Dorsolateral prefrontal cortex (tissue), 120 donors: ENCODE measurements at regions of chr2 and their contacts with region 1.

Region 1: DNA sequence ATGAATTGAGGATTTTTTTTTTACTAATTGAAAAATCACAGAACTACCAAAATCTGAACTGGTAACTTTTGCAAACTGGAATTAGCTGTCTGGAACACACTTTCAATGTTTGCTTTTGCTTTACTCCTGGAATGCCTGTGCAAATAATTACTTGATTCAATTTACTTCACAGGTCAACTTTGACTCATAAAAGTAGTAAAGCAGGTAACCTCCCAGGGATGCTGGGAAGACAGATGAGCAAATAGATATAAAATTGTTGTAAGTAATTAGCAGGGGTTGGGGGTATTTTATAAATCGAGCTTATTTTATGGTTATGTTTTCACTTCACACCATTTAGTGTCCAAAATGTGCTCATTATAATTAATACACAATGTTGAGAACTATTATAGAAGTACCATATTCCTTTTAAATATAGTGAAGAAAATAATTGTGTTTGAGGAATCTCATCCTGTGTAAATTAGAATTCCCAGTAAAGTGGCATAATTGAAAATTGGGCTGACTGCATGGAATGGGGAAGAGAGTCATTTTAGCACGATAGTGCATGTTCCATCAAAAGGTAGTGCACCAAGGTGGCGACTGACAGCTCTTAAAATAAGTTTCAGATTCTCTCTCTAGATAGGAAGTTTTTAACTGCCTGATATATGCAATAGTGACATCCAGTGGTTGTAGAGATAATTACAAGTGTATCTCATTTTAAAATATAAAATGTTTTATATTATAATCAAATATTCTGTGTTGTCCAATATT is 398.1 kb upstream of the HNRNPA3 start:
- DNase-seq: no peak
- H3K4me3 ChIP-seq: no peak overlapping the region
- H3K27ac ChIP-seq: peak overlapping the region in 1 of 59 donors; percentile 1
- H3K27me3 ChIP-seq: peaks cover 0 to 5% (median 0%) of the 10 kb centered on the region in 45 donors
- CTCF ChIP-seq: peak; percentile 52 to 80 (median 66)

Region 2: DNA sequence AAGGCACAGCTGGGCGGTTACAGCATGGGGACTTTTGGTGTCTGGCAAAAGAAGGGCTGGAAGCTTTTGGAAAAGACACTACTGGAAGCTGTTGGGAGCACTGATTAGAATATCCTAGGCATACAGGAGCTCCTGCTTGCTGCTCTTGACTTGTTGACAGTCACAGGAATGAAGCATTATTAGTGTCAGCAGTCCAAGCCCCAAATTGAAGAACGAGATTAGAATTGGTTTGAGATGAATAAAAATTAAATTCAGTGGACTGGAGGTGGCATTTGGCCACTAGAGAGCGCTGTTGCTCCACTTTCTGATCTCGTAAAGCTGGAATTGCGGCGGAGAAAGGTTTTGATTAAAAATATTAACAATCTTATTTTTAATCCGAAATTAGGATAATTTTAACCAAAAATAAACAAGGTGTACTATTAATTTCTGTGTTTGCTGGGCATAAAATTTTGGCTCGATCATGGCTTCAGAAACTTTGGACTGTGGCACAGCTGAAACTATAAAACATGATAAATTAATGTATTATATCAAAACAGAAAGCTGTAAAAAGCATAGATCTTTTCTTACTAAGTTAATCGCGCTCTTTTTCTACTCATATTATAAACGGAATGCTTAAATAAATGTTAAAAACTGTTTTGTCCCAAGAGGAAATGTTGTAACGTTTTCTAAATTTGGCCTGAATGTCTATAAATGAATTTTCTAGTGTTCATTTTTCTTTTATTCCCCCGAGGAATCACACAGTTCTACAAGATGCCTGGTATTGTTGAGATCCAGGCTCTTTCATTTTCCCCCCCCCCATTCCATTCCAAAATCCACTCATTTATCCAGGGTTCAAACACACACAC is 687.3 kb before region 1 on chr2:
- intact Hi-C with region 1: loop called in 1 of 2 experiments (anchors 10 kb)
- DNase-seq: peak in 9 of 10 donors; percentile 47 to 74 (median 63)
- H3K4me3 ChIP-seq: no peak overlapping the region
- H3K27ac ChIP-seq: no peak overlapping the region
- H3K27me3 ChIP-seq: peaks cover 22 to 100% (median 95%) of the 10 kb centered on the region in 45 donors
- CTCF ChIP-seq: peak; percentile 73 to 98 (median 90)

Region 3: GRCh38 chr2:176653479-176654443 is 160.7 kb before region 1 on chr2:
- intact Hi-C with region 1: loop called in 1 of 2 experiments (anchors 10 kb)
- DNase-seq: peak in 8 of 10 donors; percentile 28 to 59 (median 38)
- H3K4me3 ChIP-seq: peak overlapping the region in 1 of 59 donors; percentile 12
- H3K27ac ChIP-seq: no peak overlapping the region
- H3K27me3 ChIP-seq: peaks cover 0 to 52% (median 7%) of the 10 kb centered on the region in 45 donors
- CTCF ChIP-seq: peak; percentile 13 to 77 (median 65)

Region 4: DNA sequence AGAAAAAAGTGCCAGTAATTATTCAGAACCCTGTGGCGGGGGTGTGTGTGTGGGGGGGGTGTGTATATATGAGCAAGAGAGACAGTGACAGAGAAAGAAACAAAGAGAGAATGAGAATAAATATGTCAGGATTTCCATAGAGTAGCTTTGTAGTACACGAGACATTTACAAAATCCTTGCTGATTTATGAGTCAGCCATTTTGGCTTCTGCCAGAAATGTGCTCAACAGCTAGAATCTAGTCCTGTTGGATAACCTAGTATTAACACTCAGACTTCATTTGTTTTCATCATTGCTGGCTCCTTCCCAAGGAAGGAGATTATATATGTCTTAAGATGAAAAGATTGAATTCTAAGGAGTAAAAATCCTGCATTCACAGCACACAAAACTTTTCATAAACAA is 257.6 kb after region 1 on chr2:
- intact Hi-C with region 1: no loop called
- DNase-seq: no peak
- H3K4me3 ChIP-seq: no peak overlapping the region
- H3K27ac ChIP-seq: no peak overlapping the region
- H3K27me3 ChIP-seq: peaks cover 0 to 3% (median 0%) of the 10 kb centered on the region in 45 donors
- CTCF ChIP-seq: no peak